ENCODE measurements at regions of chr4 and their contacts with region 1.

Region 1: DNA sequence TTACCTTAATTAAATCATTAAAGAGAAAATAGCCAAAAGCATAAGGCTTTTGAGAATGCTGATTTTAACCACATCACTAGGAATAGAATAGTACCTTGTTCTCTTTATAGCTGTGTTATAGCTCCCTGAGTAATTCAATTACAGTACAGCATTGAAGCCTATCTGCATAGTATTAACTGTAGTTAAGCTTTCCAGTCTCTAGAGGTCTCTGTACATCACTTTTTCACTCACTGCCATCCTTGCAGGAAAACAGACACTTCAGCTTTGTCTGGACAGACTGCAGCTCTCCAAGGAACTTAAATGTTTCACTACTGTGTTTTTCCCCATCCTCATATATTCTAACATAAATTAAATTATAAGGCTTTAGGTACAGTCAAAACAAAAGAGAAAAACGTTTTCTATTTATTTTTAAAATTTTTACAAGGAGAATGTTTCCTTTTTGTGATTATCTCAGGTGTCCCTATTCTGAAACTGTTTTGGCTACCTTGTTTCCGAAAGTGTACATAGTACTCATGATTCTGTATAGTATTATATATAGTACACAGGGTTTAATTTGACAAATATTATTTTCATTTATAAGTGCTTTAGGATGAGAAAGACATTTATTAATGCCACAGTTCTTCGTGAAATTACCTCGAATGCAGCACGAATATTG is 407.9 kb downstream of the PCDH18 start:
- DNase-seq: no peak
- ATAC-seq: peak; percentile 89
- H3K4me3 ChIP-seq: peak overlapping the region; percentile 72 to 97
- H3K27ac ChIP-seq: no peak overlapping the region
- H3K4me1 ChIP-seq: no peaks in the 10 kb centered on the region
- H3K27me3 ChIP-seq: no peaks in the 10 kb centered on the region

Region 2: GRCh38 chr4:137193564-137193963 is 69.2 kb after region 1 on chr4:
- intact Hi-C with region 1: no loop called
- DNase-seq: no peak
- ATAC-seq: no peak
- H3K4me3 ChIP-seq: no peak overlapping the region
- H3K27ac ChIP-seq: no peak overlapping the region
- H3K4me1 ChIP-seq: no peaks in the 10 kb centered on the region
- H3K27me3 ChIP-seq: no peaks in the 10 kb centered on the region

Region 3: DNA sequence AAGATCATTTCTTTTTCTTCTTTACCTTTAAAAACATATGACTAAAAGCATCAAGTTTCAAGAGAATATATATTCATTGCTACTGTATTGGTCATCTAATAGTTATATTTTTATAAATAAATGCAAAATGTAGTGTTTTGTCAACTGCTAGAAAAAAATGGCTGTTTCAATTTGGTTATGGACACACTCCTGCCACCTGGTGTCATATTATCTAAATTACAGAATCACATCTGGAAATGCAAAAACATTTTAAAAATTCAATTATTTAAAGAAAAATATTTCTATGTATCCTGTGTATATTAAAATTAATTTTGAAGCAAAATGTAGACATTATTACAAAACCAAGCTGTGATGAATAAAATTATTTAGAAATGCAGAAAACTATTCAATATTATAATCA is 737.3 kb after region 1 on chr4:
- intact Hi-C with region 1: loop called (anchors 2 to 5 kb)
- DNase-seq: no peak
- ATAC-seq: no peak
- H3K4me3 ChIP-seq: no peak overlapping the region
- H3K27ac ChIP-seq: no peak overlapping the region
- H3K4me1 ChIP-seq: no peaks in the 10 kb centered on the region
- H3K27me3 ChIP-seq: no peaks in the 10 kb centered on the region

Region 4: DNA sequence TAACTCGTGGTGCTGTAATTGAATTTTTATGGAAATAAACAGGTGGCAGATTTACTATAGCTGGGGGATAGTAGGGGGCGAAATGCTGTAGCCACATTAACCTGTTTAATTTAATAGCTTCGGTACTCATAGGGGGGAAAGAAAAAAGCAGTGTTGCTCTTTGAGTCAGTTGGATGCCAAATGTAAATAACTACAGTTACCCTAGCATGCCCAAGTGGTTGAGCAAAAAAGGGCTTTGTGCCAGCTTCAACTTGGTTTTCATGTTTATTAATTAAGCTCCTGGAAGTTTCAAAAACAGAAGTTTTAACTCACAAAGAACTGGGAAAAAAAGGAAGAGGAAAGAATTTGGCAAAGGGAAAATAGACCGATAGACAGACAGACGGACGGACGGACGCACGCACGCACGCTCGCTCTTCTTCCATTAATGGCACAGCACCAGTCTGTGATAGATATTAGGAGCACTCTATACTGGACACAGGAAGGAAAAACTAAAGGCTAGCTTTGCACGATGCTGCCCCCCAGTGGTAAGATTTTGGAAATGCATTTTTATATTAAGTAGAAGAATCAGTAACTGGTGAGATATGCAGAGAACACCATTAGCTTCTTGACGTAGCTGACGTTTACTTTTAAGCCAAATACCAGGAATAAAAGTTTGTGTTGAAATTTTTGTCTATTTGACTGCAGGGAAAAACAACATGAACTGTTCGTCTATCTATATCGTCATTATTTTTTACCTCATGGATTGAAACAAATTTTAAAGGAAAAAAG is 965.9 kb after region 1 on chr4:
- intact Hi-C with region 1: loop called in 1 of 2 experiments (anchors 10 kb)
- DNase-seq: no peak
- ATAC-seq: peak; percentile 90
- H3K4me3 ChIP-seq: peak overlapping the region in 1 of 2 donors; percentile 13
- H3K27ac ChIP-seq: no peak overlapping the region
- H3K4me1 ChIP-seq: peaks cover 0 to 9% of the 10 kb centered on the region in 2 donors
- H3K27me3 ChIP-seq: no peaks in the 10 kb centered on the region

Region 5: GRCh38 chr4:138174981-138175794 is 1050.8 kb after region 1 on chr4:
- intact Hi-C with region 1: loop called in 1 of 2 experiments (anchors 5 kb)
- DNase-seq: no peak
- ATAC-seq: no peak
- H3K4me3 ChIP-seq: no peak overlapping the region
- H3K27ac ChIP-seq: no peak overlapping the region
- H3K4me1 ChIP-seq: no peaks in the 10 kb centered on the region
- H3K27me3 ChIP-seq: no peaks in the 10 kb centered on the region

Region 6: GRCh38 chr4:138680989-138681604 is 1556.7 kb after region 1 on chr4:
- intact Hi-C with region 1: loop called in 1 of 2 experiments (anchors 5 kb)
- DNase-seq: peak; percentile 84 to 90
- ATAC-seq: peak; percentile 89
- H3K4me3 ChIP-seq: no peak overlapping the region
- H3K27ac ChIP-seq: no peak overlapping the region
- H3K4me1 ChIP-seq: no peaks in the 10 kb centered on the region
- H3K27me3 ChIP-seq: no peaks in the 10 kb centered on the region